ENCODE measurements at regions of chr1 and their contacts with region 1.

Region 1: GRCh38 chr1:201042779-201043461 is 19.4 kb upstream of the KIF21B start:
- DNase-seq: no peak
- H3K4me3 ChIP-seq: no peak overlapping the region
- H3K27ac ChIP-seq: no peak overlapping the region
- H3K4me1 ChIP-seq: no peaks in the 10 kb centered on the region
- H3K27me3 ChIP-seq: no peaks in the 10 kb centered on the region
- CTCF ChIP-seq: peak; percentile 59 to 75 (median 66)
- POLR2A ChIP-seq: no peak

Region 2: GRCh38 chr1:200971955-200972711 is 70.8 kb before region 1 on chr1:
- intact Hi-C with region 1: loop called (anchors 5 kb)
- DNase-seq: no peak
- H3K4me3 ChIP-seq: no peak overlapping the region
- H3K27ac ChIP-seq: no peak overlapping the region
- H3K4me1 ChIP-seq: peaks cover 4% of the 10 kb centered on the region
- H3K27me3 ChIP-seq: no peaks in the 10 kb centered on the region
- CTCF ChIP-seq: peak; percentile 59 to 98 (median 59)
- POLR2A ChIP-seq: no peak

Measured in vagina (tissue), 2 donors.